ENCODE measurements at regions of chr11 and their contacts with region 1.

Region 1: DNA sequence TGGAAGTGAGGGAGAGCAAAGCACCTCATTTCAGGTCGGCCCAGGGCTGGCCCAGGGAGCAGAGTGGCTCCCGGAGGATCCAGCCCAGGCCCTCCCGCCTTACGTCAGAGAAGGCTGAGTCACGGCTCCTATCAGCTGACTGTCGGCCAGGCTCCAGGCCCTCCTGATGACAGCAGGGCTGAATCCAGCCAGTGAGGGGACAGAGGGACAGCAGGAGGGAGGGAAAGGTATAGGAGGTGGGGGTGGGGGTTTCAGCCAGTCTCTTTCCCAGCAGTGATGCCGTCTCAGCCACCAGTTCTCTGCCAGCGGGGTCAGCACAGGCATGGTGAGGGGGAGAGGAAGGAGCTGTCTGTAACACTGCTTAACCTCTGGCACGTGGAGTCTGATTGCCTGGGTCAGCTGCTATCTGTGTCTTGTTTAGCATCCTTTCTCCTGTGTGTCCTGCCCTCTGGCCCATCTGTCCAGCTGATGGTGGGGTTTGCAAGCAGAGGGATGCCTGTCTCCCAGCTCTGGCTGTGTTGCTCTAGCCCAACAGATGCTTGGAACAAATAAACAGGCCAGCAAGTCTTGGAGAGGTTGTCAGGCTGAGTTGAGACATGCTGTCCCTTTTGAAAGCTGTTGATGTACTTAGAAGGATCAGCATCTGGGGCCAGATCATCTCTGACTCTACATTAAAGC is 74.0 kb downstream of the ADAMTS15 start:
- DNase-seq: peak; percentile 96 to 98
- H3K4me3 ChIP-seq: no peak overlapping the region
- H3K27ac ChIP-seq: peak overlapping the region; percentile 86 to 91
- H3K4me1 ChIP-seq: peaks cover 11 to 55% (median 35%) of the 10 kb centered on the region in 4 donors
- H3K27me3 ChIP-seq: no peaks in the 10 kb centered on the region
- CTCF ChIP-seq: no peak

Region 2: DNA sequence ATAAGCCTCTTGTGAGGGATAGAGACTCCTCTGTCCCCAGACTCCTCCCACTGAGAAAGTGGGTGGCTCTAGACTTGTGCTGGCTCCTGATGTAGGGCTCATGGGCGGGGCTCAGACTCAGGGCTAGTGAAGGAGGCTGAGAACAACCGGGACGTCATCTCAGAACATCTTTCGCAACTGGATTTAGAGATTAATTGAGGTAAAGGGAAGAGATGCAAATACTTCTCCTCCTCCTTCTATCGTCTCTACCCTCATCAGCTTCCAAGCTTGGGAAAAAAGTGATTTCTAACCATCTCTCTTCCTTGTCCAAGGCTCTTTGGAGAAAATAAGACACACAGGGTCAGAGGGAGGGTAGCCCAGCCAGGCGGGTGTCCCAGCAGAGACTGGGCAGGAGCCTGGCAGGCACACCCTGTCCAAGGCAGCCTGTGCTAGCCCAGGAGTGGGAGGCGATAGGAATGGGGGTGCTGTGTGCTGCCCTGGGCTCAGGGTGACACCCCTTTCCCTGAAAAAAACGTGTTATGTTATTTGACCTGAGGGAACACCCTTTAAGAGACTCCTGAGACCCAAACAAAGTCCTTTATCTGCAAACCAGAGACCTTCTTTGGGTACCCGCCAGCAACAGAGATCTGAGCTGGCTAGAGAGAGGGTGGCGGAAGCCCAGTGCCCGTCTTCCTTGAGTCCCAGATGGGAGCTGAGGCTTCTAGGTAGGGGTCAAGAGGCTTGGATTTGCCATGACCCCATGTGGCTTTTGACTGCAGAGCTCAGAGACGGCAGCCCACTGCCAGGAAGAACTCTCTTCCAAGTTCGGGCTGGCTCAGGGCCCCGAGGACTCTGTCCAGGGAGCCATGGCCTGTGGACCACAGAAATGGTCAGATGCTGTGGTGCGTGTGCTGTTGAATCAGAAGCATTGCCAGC is 87.0 kb after region 1 on chr11:
- intact Hi-C with region 1: loop called (anchors 2 kb)
- DNase-seq: peak; percentile 98 to 99
- H3K4me3 ChIP-seq: peak overlapping the region; percentile 2 to 3
- H3K27ac ChIP-seq: peak overlapping the region; percentile 80 to 86
- H3K4me1 ChIP-seq: peaks cover 4 to 72% (median 52%) of the 10 kb centered on the region in 4 donors
- H3K27me3 ChIP-seq: no peaks in the 10 kb centered on the region
- CTCF ChIP-seq: no peak

Region 3: GRCh38 chr11:130671801-130672700 is 149.6 kb after region 1 on chr11:
- intact Hi-C with region 1: loop called (anchors 10 kb)
- DNase-seq: peak; percentile 79 to 89
- H3K4me3 ChIP-seq: no peak overlapping the region
- H3K27ac ChIP-seq: peak overlapping the region; percentile 81 to 85
- H3K4me1 ChIP-seq: peaks cover 0 to 66% (median 40%) of the 10 kb centered on the region in 4 donors
- H3K27me3 ChIP-seq: no peaks in the 10 kb centered on the region
- CTCF ChIP-seq: no peak

Region 4: GRCh38 chr11:130964058-130964792 is 441.8 kb after region 1 on chr11:
- intact Hi-C with region 1: no loop called
- DNase-seq: no peak
- H3K4me3 ChIP-seq: no peak overlapping the region
- H3K27ac ChIP-seq: no peak overlapping the region
- H3K4me1 ChIP-seq: no peaks in the 10 kb centered on the region
- H3K27me3 ChIP-seq: no peaks in the 10 kb centered on the region
- CTCF ChIP-seq: no peak

Measured in tibial artery (tissue), 4 donors.